RWPE1 (cell line): ENCODE measurements at regions of chr9 and their contacts with region 1.

Region 1: DNA sequence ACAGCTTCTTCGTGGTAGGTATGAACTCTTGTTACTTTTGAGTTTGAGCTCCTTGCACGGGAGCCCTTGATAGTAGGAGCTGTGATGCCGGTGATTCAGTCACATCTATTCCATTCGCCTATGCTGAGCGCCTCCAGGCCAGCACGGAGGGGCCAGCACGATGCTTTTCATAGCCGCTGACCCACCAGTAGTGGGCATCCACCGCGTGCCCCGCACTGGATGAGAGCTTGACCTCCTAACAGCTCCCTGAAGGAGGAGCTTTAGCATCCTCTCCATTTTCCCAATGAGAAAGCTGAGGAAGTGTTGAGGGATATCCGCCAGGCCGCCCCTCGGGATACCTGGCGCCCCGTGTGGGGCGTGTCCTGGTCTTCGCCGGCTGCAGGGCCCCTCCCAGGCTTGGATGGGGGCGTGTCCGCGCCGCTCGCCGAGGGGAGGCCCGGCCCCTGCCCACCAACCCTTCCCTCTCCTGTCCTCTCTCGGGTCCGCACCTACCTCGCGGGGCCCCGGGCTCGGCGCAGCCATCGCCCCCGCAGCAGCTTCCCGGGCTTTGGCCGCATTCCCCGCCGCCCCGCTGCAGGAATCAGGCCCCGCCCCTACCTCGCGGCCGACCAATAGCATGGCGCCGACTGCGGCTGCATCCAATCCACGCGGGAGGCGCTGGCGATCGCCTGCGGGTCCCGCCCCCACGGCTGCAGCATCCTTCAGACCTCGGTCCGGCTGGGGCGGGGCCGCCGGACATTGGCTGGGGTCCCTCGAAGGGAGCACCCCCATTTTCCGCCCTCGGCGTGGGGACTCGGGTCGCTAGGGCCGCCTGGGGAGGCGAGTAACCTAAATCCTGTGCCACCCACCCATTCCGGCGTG is at the start of gene PIP5KL1:
- DNase-seq: peak; percentile 99
- H3K27ac ChIP-seq: peak within 1 kb of the TSS; percentile 75
- CTCF ChIP-seq: no peak

Region 2: DNA sequence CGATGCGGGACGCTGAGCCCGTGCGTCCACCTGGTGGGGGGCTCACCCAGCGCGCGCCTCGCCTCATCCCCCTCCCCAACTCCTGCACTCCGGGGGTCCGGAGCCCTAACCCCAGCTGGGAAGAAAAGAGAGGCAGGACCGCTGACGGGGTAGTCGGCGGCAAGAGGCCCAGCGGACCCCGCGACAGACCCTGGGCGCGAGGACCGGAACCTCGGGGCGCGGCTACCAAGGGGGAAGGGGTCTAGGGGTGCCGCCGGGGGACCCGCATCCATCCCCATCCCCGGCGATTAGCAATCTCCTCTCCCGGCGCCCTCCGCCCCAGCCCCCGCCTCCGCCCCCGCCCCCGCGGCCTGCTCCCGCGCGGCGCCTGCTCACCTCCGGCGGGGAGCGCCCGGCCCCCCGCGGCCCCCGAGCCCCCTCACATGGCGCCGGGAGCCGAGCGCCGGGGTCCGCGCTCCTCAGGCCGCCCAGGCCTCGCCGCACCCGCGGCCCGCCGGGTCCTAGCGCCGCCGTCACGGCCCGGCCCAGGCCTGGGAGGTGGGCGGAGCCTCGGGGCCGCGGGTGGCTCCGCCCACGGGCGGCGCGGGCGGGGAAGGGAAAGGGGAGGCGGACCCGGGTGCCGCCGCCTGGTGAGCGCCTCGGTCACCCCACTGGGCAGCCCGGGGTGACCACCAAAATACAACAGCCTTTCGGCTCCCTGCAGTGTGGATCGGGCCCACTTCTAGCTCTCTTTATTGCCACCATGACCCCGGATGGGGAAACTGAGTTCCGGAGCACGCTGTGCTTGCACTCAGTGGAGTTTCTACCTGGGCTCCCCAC is 31.1 kb before region 1 on chr9 and contains the start of gene ST6GALNAC6:
- CTCF ChIA-PET with region 1: no interaction called
- POLR2A ChIA-PET with region 1: no interaction called
- DNase-seq: peak; percentile 95
- H3K27ac ChIP-seq: peak within 1 kb of the TSS; percentile 84
- CTCF ChIP-seq: no peak

Region 3: GRCh38 chr9:128065907-128066494 is 135.5 kb after region 1 on chr9:
- CTCF ChIA-PET with region 1: no interaction called
- POLR2A ChIA-PET with region 1: interaction called, 13 read pairs
- DNase-seq: no peak
- H3K27ac ChIP-seq: peak overlapping the region; percentile 92
- CTCF ChIP-seq: no peak